ENCODE measurements at regions of chr5 and their contacts with region 1.

Region 1: DNA sequence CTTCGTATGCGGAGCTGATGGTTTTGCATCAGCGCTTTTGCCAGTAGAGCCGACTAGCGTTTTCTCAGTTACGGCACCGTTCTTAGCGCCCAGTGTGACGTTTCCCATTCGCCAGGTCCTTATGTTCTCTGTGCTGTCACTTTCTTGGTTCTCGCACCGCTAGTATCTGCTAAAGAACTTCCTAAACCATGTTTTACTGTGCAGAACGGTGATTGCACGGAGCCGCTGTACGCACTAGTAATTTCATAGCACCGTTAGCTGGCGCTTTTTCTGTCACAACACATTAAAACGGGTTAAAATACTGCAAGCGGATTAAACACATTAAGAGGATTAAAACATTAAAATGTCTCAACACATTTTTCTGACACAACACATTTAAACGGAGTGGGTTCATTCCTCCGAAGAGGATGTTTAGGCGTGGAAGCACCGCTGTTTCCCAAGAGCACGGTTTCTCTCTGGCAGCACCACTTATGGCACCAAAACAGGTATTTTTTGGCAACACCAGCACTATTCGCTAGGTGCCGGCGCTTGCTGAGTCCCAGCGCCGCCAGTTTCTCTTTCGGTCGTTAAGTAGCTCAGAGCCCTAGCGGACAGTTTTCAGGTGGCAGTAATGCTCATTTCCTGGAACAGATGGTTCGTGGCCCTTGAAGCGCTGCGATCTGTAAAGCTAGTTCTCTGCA is 20.4 kb downstream of the ANXA2R start:
- DNase-seq: peak; percentile 93
- ATAC-seq: peak; percentile 76
- H3K4me3 Mint-ChIP-seq: peak overlapping the region; percentile 96
- H3K27ac Mint-ChIP-seq: peak overlapping the region; percentile 99
- H3K4me1 Mint-ChIP-seq: peaks cover 34% of the 10 kb centered on the region
- H3K27me3 Mint-ChIP-seq: no peaks in the 10 kb centered on the region
- CTCF ChIP-seq: peak; percentile 75

Region 2: GRCh38 chr5:42950440-42951292 is 69.1 kb before region 1 on chr5:
- CTCF ChIA-PET with region 1: interaction called, 24 read pairs
- POLR2A ChIA-PET with region 1: interaction called, 11 read pairs
- intact Hi-C with region 1: no loop called
- DNase-seq: peak; percentile 82
- ATAC-seq: peak; percentile 46
- H3K4me3 Mint-ChIP-seq: peak overlapping the region; percentile 89
- H3K27ac Mint-ChIP-seq: peak overlapping the region; percentile 97
- H3K4me1 Mint-ChIP-seq: peaks cover 19% of the 10 kb centered on the region
- H3K27me3 Mint-ChIP-seq: no peaks in the 10 kb centered on the region
- CTCF ChIP-seq: no peak

Region 3: GRCh38 chr5:42970636-42971559 is 48.9 kb before region 1 on chr5:
- CTCF ChIA-PET with region 1: no interaction called
- POLR2A ChIA-PET with region 1: no interaction called
- intact Hi-C with region 1: no loop called
- DNase-seq: peak; percentile 37
- ATAC-seq: no peak
- H3K4me3 Mint-ChIP-seq: no peak overlapping the region
- H3K27ac Mint-ChIP-seq: no peak overlapping the region
- H3K4me1 Mint-ChIP-seq: peaks cover 6% of the 10 kb centered on the region
- H3K27me3 Mint-ChIP-seq: no peaks in the 10 kb centered on the region
- CTCF ChIP-seq: no peak

Region 4: DNA sequence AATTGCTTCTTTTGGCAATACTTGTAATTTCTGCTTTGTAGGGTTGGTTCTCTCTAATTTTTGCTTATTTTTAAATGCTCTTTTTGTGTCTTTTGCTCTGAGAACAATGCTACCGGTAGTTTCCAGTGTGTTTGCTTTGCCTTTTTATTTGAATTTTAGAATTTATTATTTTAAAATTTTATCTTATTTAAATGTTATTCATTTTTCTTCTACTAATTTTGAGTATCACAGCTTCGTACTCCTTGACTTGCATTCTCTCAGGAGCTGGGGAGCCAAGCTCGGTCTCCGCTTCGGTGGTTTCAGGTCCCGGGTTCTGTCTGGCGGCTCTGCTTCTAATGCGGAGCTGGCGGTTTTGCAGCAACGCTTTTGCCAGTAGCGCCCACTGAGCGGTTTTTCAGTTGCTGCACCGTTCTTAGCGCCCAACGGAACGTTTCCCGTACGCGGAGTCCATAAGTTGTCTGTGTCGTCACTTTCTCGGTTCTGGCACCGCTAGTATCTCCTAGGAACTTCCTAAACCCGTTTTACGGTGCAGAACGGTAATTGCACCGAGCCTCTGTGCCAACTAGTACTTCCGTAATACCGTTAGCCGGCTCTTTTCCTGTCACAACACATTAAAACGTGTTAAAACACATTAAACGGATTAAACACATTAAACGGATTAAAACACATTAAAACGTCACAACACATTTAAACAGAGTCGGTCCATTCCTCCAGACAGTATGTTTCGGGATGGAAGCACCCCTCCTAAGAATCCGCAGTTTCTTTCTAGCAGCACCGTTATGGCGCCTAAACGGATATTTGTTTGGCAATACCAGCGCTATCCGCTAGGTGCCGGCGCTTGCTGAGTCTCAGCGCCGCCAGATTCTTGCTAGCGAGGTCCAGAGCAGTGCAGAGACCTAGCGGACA is 25.3 kb before region 1 on chr5:
- CTCF ChIA-PET with region 1: interaction called, 132 read pairs
- POLR2A ChIA-PET with region 1: interaction called, 145 read pairs
- intact Hi-C with region 1: no loop called
- DNase-seq: peak; percentile 94
- ATAC-seq: peak; percentile 70
- H3K4me3 Mint-ChIP-seq: peak overlapping the region; percentile 90
- H3K27ac Mint-ChIP-seq: peak overlapping the region; percentile 99
- H3K4me1 Mint-ChIP-seq: peaks cover 20% of the 10 kb centered on the region
- H3K27me3 Mint-ChIP-seq: no peaks in the 10 kb centered on the region
- CTCF ChIP-seq: peak; percentile 85

Region 5: GRCh38 chr5:43008369-43009153 is 11.2 kb before region 1 on chr5:
- CTCF ChIA-PET with region 1: interaction called, 68 read pairs
- POLR2A ChIA-PET with region 1: interaction called, 95 read pairs
- intact Hi-C with region 1: loop called (anchors 1 kb)
- DNase-seq: peak; percentile 95
- ATAC-seq: peak; percentile 70
- H3K4me3 Mint-ChIP-seq: peak overlapping the region; percentile 93
- H3K27ac Mint-ChIP-seq: peak overlapping the region; percentile 99
- H3K4me1 Mint-ChIP-seq: peaks cover 30% of the 10 kb centered on the region
- H3K27me3 Mint-ChIP-seq: no peaks in the 10 kb centered on the region
- CTCF ChIP-seq: no peak

Region 6: DNA sequence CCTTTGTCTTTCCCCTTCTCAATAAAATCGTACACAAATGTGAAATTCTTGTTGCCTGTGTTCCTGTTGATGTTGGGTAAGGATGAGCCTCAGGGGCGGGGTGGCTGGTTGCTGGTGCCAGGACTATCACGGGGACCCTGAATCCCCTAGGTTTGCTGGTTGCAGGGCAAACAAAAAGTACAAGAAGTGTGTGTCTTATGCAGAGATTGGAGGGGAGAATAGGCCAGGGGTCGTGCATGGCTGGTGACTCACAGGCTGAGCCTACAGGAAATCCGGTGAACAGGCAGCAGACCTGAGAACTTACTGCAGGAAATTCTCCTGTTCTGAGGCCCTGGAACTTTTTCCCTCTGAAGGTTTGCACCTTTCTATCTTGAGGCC is 14.8 kb after region 1 on chr5:
- CTCF ChIA-PET with region 1: interaction called, 57 read pairs
- POLR2A ChIA-PET with region 1: interaction called, 98 read pairs
- intact Hi-C with region 1: no loop called
- DNase-seq: peak; percentile 45
- ATAC-seq: no peak
- H3K4me3 Mint-ChIP-seq: peak overlapping the region; percentile 22
- H3K27ac Mint-ChIP-seq: peak overlapping the region; percentile 45
- H3K4me1 Mint-ChIP-seq: peaks cover 48% of the 10 kb centered on the region
- H3K27me3 Mint-ChIP-seq: no peaks in the 10 kb centered on the region
- CTCF ChIP-seq: no peak

Region 7: DNA sequence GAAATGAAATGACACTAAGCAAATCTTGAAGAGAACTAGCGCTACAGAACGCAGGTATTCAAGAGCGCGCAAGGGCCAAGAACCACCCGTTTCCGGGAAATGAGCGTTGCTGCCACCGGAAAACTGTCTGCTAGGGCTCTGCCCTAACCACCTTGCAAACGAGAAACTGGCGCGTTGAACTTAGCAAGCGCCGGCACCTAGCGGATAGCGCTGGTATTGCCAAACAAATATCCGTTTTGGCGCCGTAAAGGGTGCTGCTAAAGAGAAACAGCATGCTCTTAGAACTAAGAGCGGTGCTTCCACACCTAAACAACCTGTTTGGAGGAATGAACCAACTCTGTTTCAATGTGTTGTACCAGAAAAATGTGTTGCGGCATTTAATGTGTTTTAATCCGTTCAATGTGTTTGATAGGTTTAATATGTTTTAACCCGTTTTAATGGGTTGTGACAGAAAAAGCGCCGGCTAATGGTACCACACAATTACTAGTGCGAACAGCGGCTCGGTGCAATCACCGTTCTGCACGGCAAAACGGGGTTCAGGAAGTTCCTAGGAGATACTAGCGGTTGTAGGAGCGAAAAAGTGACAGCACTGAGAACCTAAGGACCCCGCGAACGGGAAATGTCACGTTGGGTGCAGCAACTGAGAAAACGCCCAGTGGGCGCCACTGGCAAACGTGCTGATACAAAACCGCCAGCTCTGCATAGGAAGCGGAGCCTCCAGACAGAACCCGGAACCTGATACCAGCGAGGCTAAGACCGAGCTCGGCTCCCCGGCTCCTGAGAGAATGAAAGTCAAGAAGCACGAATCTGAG is 20.7 kb after region 1 on chr5 and contains the start of gene ANXA2R:
- CTCF ChIA-PET with region 1: interaction called, 57 read pairs
- POLR2A ChIA-PET with region 1: interaction called, 98 read pairs
- intact Hi-C with region 1: loop called (anchors 1 kb)
- DNase-seq: peak; percentile 97
- ATAC-seq: peak; percentile 67
- H3K4me3 Mint-ChIP-seq: peak within 1 kb of the TSS; percentile 81
- H3K27ac Mint-ChIP-seq: peak within 1 kb of the TSS; percentile 98
- H3K4me1 Mint-ChIP-seq: peaks cover 38% of the 10 kb centered on the region
- H3K27me3 Mint-ChIP-seq: no peaks in the 10 kb centered on the region
- CTCF ChIP-seq: peak; percentile 76
- total RNA-seq, gene ANXA2R: 8.0 to 10.4 TPM

Region 8: DNA sequence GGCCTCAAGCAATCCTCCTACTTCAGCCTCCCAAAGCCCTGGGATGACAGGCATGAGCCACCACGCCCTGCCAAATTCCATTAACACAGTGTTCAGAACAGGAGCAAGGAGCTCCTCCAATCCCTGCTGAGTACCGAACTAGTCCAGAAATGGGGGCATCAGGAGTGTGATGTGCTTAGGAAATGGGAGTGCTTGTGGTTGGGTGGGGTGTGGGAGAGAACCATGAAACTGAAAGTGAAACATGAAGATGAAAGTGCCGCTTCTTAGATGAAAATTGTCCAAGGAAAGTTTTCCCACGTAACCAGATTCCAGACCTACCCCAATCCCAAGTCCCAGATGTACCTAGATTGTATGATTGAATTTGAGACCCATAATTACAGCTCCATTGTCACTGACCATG is 84.3 kb after region 1 on chr5:
- CTCF ChIA-PET with region 1: no interaction called
- POLR2A ChIA-PET with region 1: no interaction called
- intact Hi-C with region 1: no loop called
- DNase-seq: no peak
- ATAC-seq: no peak
- H3K4me3 Mint-ChIP-seq: peak overlapping the region; percentile 71
- H3K27ac Mint-ChIP-seq: peak overlapping the region; percentile 1
- H3K4me1 Mint-ChIP-seq: peaks cover 25% of the 10 kb centered on the region
- H3K27me3 Mint-ChIP-seq: no peaks in the 10 kb centered on the region
- CTCF ChIP-seq: no peak

Measured in activated CD8-positive, alpha-beta T cell treated with anti-CD3 and anti-CD28 coated beads for 36 hours (primary cell).